Naive thymus-derived CD4-positive, alpha-beta T cell (primary cell): ENCODE measurements at regions of chr10 and their contacts with region 1.

Region 1: GRCh38 chr10:122342293-122343134 is 32.0 kb upstream of the PLEKHA1 start:
- DNase-seq: peak in 8 of 9 donors; percentile 33 to 78 (median 66)
- ATAC-seq: peak; percentile 80
- H3K4me3 ChIP-seq: no peak overlapping the region
- H3K4me3 Mint-ChIP-seq: peak overlapping the region in 1 of 10 donors; percentile 57
- H3K27ac ChIP-seq: no peak overlapping the region
- H3K27ac Mint-ChIP-seq: peak overlapping the region in 4 of 9 donors; percentile 12 to 75 (median 42)
- H3K4me1 ChIP-seq: no peaks in the 10 kb centered on the region
- H3K4me1 Mint-ChIP-seq: peaks cover 0 to 8% (median 6%) of the 10 kb centered on the region in 7 donors
- H3K27me3 ChIP-seq: no peaks in the 10 kb centered on the region
- H3K27me3 Mint-ChIP-seq: peaks cover 0 to 7% (median 0%) of the 10 kb centered on the region in 5 donors

Region 2: GRCh38 chr10:122298598-122299301 is 43.8 kb before region 1 on chr10:
- CTCF ChIA-PET with region 1: interaction called, 3 read pairs
- POLR2A ChIA-PET with region 1: no interaction called
- intact Hi-C with region 1: loop called in 1 of 2 experiments (anchors 1 kb)
- DNase-seq: peak; percentile 30 to 66 (median 53)
- ATAC-seq: peak; percentile 88
- H3K4me3 ChIP-seq: no peak overlapping the region
- H3K4me3 Mint-ChIP-seq: peak overlapping the region in 5 of 10 donors; percentile 27 to 63 (median 51)
- H3K27ac ChIP-seq: no peak overlapping the region
- H3K27ac Mint-ChIP-seq: no peak overlapping the region
- H3K4me1 ChIP-seq: no peaks in the 10 kb centered on the region
- H3K4me1 Mint-ChIP-seq: peaks cover 0 to 10% (median 8%) of the 10 kb centered on the region in 7 donors
- H3K27me3 ChIP-seq: no peaks in the 10 kb centered on the region
- H3K27me3 Mint-ChIP-seq: peaks cover 0 to 5% (median 0%) of the 10 kb centered on the region in 5 donors